ENCODE measurements at regions of chr1 and their contacts with region 1.

Region 1: GRCh38 chr1:48498096-48498791 is 26.2 kb upstream of the SPATA6 start:
- DNase-seq: peak; percentile 35 to 82 (median 61)
- ATAC-seq: peak; percentile 84
- H3K4me3 ChIP-seq: no peak overlapping the region
- H3K4me3 Mint-ChIP-seq: peak overlapping the region; percentile 22
- H3K27ac ChIP-seq: no peak overlapping the region
- H3K27ac Mint-ChIP-seq: no peak overlapping the region
- H3K4me1 ChIP-seq: peaks cover 5% of the 10 kb centered on the region
- H3K4me1 Mint-ChIP-seq: peaks cover 6% of the 10 kb centered on the region
- H3K27me3 ChIP-seq: peaks cover 0 to 7% of the 10 kb centered on the region in 2 experiments
- H3K27me3 Mint-ChIP-seq: no peaks in the 10 kb centered on the region
- CTCF ChIP-seq: peak; percentile 95

Region 2: DNA sequence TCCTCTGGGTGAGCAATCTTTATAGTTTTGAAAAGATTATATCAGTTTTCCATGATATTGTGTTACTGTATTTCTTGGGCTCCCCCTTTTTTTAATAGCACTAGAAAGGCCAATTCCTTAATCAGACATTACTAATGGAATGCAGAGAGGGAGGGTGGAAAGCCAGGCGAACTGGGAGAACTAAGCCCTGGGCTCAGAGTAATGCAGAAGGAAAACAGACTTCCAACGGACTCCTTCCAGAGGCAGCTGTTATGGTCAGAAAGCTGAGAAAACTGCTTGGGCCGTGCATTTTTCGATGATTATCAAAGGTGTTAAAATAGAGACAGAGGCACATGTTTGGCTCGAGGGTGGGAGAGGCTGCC is 854.1 kb before region 1 on chr1:
- CTCF ChIA-PET with region 1: no interaction called
- POLR2A ChIA-PET with region 1: no interaction called
- intact Hi-C with region 1: no loop called
- DNase-seq: no peak
- ATAC-seq: no peak
- H3K4me3 ChIP-seq: no peak overlapping the region
- H3K4me3 Mint-ChIP-seq: no peak overlapping the region
- H3K27ac ChIP-seq: no peak overlapping the region
- H3K27ac Mint-ChIP-seq: no peak overlapping the region
- H3K4me1 ChIP-seq: no peaks in the 10 kb centered on the region
- H3K4me1 Mint-ChIP-seq: no peaks in the 10 kb centered on the region
- H3K27me3 ChIP-seq: no peaks in the 10 kb centered on the region
- H3K27me3 Mint-ChIP-seq: peaks cover 41% of the 10 kb centered on the region
- CTCF ChIP-seq: no peak

Region 3: GRCh38 chr1:48093696-48094528 is 404.3 kb before region 1 on chr1:
- CTCF ChIA-PET with region 1: no interaction called
- POLR2A ChIA-PET with region 1: no interaction called
- intact Hi-C with region 1: loop called in 1 of 2 experiments (anchors 5 kb)
- DNase-seq: peak; percentile 51 to 80 (median 65)
- ATAC-seq: peak; percentile 80
- H3K4me3 ChIP-seq: no peak overlapping the region
- H3K4me3 Mint-ChIP-seq: peak overlapping the region; percentile 82
- H3K27ac ChIP-seq: no peak overlapping the region
- H3K27ac Mint-ChIP-seq: no peak overlapping the region
- H3K4me1 ChIP-seq: peaks cover 7% of the 10 kb centered on the region
- H3K4me1 Mint-ChIP-seq: peaks cover 6% of the 10 kb centered on the region
- H3K27me3 ChIP-seq: peaks cover 14 to 35% of the 10 kb centered on the region in 2 experiments
- H3K27me3 Mint-ChIP-seq: peaks cover 75% of the 10 kb centered on the region
- CTCF ChIP-seq: peak; percentile 83

Region 4: GRCh38 chr1:48309564-48310082 is 188.6 kb before region 1 on chr1:
- CTCF ChIA-PET with region 1: no interaction called
- POLR2A ChIA-PET with region 1: no interaction called
- intact Hi-C with region 1: no loop called
- DNase-seq: no peak
- ATAC-seq: no peak
- H3K4me3 ChIP-seq: no peak overlapping the region
- H3K4me3 Mint-ChIP-seq: no peak overlapping the region
- H3K27ac ChIP-seq: no peak overlapping the region
- H3K27ac Mint-ChIP-seq: no peak overlapping the region
- H3K4me1 ChIP-seq: no peaks in the 10 kb centered on the region
- H3K4me1 Mint-ChIP-seq: no peaks in the 10 kb centered on the region
- H3K27me3 ChIP-seq: no peaks in the 10 kb centered on the region
- H3K27me3 Mint-ChIP-seq: no peaks in the 10 kb centered on the region
- CTCF ChIP-seq: no peak

Region 5: GRCh38 chr1:48356901-48357300 is 141.3 kb before region 1 on chr1:
- CTCF ChIA-PET with region 1: no interaction called
- POLR2A ChIA-PET with region 1: no interaction called
- intact Hi-C with region 1: loop called in 1 of 2 experiments (anchors 5 kb)
- DNase-seq: no peak
- ATAC-seq: no peak
- H3K4me3 ChIP-seq: no peak overlapping the region
- H3K4me3 Mint-ChIP-seq: no peak overlapping the region
- H3K27ac ChIP-seq: no peak overlapping the region
- H3K27ac Mint-ChIP-seq: no peak overlapping the region
- H3K4me1 ChIP-seq: no peaks in the 10 kb centered on the region
- H3K4me1 Mint-ChIP-seq: no peaks in the 10 kb centered on the region
- H3K27me3 ChIP-seq: no peaks in the 10 kb centered on the region
- H3K27me3 Mint-ChIP-seq: no peaks in the 10 kb centered on the region
- CTCF ChIP-seq: no peak

Region 6: DNA sequence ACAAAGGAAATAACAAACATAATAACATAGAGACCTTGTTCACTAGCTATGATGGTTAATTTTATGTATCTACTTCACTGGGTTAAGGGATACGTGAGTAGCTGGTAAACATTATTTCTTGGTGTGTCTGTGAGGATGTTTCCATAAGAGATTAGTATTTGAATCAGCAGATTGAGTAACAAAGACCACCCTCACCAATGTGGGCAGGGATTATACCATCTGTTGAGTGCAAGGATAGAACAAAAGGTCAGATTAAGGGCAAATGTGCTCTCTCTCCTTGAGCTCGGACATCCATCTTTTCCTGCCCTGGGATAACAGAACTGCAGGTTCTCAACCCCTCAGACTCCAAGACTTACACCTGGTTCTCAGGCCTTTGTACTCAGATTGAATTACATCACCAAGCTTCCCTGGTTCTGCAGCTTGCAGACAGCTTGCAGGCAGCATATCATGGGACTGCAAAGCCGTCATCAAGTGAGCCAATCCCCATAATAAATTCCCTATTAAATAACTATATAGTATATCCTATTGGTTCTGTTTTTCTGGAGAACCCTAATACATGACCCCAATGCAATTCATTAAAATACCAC is 35.4 kb before region 1 on chr1:
- CTCF ChIA-PET with region 1: no interaction called
- POLR2A ChIA-PET with region 1: no interaction called
- intact Hi-C with region 1: no loop called
- DNase-seq: no peak
- ATAC-seq: no peak
- H3K4me3 ChIP-seq: no peak overlapping the region
- H3K4me3 Mint-ChIP-seq: no peak overlapping the region
- H3K27ac ChIP-seq: no peak overlapping the region
- H3K27ac Mint-ChIP-seq: no peak overlapping the region
- H3K4me1 ChIP-seq: no peaks in the 10 kb centered on the region
- H3K4me1 Mint-ChIP-seq: peaks cover 4% of the 10 kb centered on the region
- H3K27me3 ChIP-seq: no peaks in the 10 kb centered on the region
- H3K27me3 Mint-ChIP-seq: no peaks in the 10 kb centered on the region
- CTCF ChIP-seq: no peak

Region 7: GRCh38 chr1:48610628-48611542 is 112.6 kb after region 1 on chr1:
- CTCF ChIA-PET with region 1: no interaction called
- POLR2A ChIA-PET with region 1: no interaction called
- intact Hi-C with region 1: no loop called
- DNase-seq: no peak
- ATAC-seq: no peak
- H3K4me3 ChIP-seq: no peak overlapping the region
- H3K4me3 Mint-ChIP-seq: no peak overlapping the region
- H3K27ac ChIP-seq: no peak overlapping the region
- H3K27ac Mint-ChIP-seq: no peak overlapping the region
- H3K4me1 ChIP-seq: no peaks in the 10 kb centered on the region
- H3K4me1 Mint-ChIP-seq: no peaks in the 10 kb centered on the region
- H3K27me3 ChIP-seq: peaks cover 0 to 2% of the 10 kb centered on the region in 2 experiments
- H3K27me3 Mint-ChIP-seq: peaks cover 24% of the 10 kb centered on the region
- CTCF ChIP-seq: no peak